CD8-positive, alpha-beta T cell (primary cell): ENCODE measurements at regions of chrX and their contacts with region 1.

Region 1: GRCh38 chrX:40719218-40719617 is 16.1 kb downstream of the MED14 start:
- DNase-seq: no peak
- ATAC-seq: no peak
- H3K4me3 ChIP-seq: no peak overlapping the region
- H3K4me3 Mint-ChIP-seq: no peak overlapping the region
- H3K27ac ChIP-seq: no peak overlapping the region
- H3K27ac Mint-ChIP-seq: peak overlapping the region; percentile 71
- H3K4me1 ChIP-seq: peaks cover 9% of the 10 kb centered on the region
- H3K4me1 Mint-ChIP-seq: peaks cover 57% of the 10 kb centered on the region
- H3K27me3 ChIP-seq: no peaks in the 10 kb centered on the region
- H3K27me3 Mint-ChIP-seq: no peaks in the 10 kb centered on the region
- CTCF ChIP-seq: no peak

Region 2: DNA sequence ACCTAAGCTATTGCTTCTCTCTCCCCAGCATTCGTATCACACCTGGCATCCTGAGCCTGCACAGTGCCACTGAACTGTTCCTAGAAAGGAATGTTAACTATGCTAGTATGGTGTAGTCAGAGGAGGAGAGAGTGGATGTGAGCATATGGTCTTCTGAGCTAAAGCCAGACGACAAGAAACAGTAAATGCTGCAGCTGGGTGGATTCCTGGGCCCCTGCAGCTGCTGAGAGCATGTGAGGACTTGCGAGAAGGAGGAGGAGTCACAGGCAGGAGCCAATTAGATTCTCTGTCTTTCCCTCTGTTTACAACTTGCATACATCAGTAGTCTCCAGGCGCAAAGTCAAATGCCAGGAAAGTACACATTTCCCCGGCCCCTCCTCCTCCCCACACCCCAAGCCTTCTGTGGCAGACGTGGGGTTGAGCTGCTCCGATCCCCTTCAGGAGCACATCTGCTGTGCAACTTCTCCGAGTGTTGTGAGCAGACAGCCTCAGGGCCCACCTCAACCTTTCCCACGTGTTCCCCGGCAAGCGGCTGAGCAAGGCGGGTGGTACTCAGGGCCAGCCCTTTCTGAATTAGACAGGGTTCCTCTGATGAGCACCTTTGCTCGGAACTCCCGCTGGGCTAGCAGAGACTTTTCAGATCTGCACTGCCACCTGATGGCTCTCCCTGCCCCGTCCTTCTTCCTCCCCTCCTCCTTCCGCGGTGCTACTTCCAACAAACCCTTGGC is 247.1 kb before region 1 on chrX:
- CTCF ChIA-PET with region 1: no interaction called
- POLR2A ChIA-PET with region 1: no interaction called
- intact Hi-C with region 1: no loop called
- DNase-seq: peak in 7 of 9 experiments; percentile 2 to 53 (median 18)
- ATAC-seq: peak; percentile 58
- H3K4me3 ChIP-seq: no peak overlapping the region
- H3K4me3 Mint-ChIP-seq: peak overlapping the region; percentile 69
- H3K27ac ChIP-seq: no peak overlapping the region
- H3K27ac Mint-ChIP-seq: no peak overlapping the region
- H3K4me1 ChIP-seq: peaks cover 12% of the 10 kb centered on the region
- H3K4me1 Mint-ChIP-seq: peaks cover 32% of the 10 kb centered on the region
- H3K27me3 ChIP-seq: no peaks in the 10 kb centered on the region
- H3K27me3 Mint-ChIP-seq: peaks cover 2% of the 10 kb centered on the region
- CTCF ChIP-seq: no peak

Region 3: DNA sequence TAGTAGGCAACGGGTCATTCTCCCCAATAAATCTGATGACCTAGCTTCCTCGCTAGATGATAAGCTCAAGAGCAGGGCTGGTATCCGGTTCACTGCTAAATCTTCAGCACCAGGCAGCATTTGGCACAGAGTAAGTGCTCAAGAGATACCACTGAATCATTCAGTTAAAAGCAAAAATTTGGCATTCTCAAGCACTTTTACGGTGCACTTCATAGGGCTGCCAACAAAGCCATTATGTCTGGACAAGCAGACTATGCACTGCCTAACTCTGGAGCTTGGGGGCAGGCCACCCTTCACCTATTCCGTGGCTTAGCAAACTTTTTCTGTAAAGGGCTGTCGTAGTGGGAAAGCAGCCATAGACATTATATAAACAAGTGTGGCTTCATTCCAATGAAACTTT is 48.1 kb before region 1 on chrX:
- CTCF ChIA-PET with region 1: no interaction called
- POLR2A ChIA-PET with region 1: no interaction called
- intact Hi-C with region 1: loop called in 1 of 2 experiments (anchors 5 kb)
- DNase-seq: no peak
- ATAC-seq: no peak
- H3K4me3 ChIP-seq: no peak overlapping the region
- H3K4me3 Mint-ChIP-seq: no peak overlapping the region
- H3K27ac ChIP-seq: no peak overlapping the region
- H3K27ac Mint-ChIP-seq: no peak overlapping the region
- H3K4me1 ChIP-seq: no peaks in the 10 kb centered on the region
- H3K4me1 Mint-ChIP-seq: no peaks in the 10 kb centered on the region
- H3K27me3 ChIP-seq: no peaks in the 10 kb centered on the region
- H3K27me3 Mint-ChIP-seq: no peaks in the 10 kb centered on the region
- CTCF ChIP-seq: no peak